ENCODE measurements at regions of chr5 and their contacts with region 1.

Region 1: DNA sequence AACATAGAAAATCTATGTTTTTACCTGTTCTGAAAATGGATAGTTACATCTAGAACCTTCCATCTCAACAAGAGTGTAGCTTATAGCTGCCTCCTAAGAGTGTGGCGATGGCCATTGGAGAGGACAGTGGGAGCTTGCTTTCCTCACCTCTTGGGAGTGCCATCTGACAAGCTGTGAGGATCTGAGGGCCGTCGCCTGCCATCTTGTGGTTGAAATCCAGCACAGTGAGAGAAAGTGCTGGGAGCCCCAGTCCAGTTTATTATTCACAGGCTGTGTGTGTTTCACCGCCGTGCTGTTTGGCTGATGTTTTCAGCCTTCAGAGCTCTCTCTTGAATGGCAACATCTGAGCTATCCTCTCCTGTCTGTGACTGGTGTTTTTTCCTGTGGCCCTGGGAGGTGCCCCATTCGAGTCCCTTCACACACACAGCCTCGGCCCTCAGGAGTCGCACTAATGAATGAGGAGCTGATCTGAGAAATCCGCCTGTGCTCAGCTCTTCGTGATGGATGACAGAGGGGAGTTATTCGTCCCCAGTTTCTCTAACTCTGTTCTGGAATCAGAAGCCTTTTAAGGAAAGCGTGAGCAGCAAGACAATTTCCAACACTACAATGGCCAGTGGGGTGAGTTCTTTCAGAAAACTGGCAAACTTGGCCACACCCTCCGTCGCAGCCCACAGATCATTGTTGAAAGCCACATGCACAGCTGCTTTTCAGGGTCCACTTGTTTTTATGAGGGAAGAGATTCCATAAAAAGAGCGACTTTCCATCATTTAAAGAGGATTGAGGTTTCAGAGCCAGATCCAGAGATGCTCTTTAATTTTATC is 170.3 kb downstream of the PDZD2 start:
- DNase-seq: peak; percentile 74
- ATAC-seq: peak; percentile 92
- H3K4me3 ChIP-seq: no peak overlapping the region
- H3K27ac ChIP-seq: no peak overlapping the region
- H3K4me1 ChIP-seq: no peaks in the 10 kb centered on the region
- H3K27me3 ChIP-seq: no peaks in the 10 kb centered on the region
- CTCF ChIP-seq: peak; percentile 77

Region 2: DNA sequence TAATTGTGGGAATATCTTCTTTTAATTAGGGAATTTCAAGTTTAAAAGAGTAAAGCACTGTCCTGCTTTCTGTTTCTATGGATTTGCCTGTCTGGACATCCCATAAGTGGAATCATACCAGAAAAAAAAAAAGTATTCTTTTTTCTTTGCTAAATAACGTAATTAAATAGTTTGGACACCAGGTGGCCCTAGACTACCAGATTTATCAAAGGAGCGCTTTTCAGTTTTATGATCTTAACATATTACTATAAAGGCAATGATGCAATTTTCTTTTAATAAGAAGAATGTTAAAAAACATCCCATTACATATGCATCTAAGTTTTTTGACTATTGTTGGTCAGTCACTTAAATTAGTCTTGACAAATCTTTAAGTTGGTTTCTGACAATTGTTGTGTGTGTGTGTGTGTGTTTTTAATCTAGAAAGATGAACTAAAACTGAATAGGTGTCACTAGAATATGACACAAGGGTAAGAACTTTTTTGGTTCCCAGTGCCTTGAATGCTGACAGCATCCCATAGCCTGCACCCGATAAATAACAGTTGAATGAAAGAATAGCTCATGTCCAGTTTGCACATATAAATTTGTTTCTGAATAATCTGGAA is 227.7 kb before region 1 on chr5:
- intact Hi-C with region 1: loop called (anchors 10 kb)
- DNase-seq: no peak
- ATAC-seq: peak; percentile 50
- H3K4me3 ChIP-seq: no peak overlapping the region
- H3K27ac ChIP-seq: no peak overlapping the region
- H3K4me1 ChIP-seq: no peaks in the 10 kb centered on the region
- H3K27me3 ChIP-seq: no peaks in the 10 kb centered on the region
- CTCF ChIP-seq: peak; percentile 50

Measured in upper lobe of right lung (tissue), 1 donor.